ENCODE measurements at regions of chr11 and their contacts with region 1.

Region 1: DNA sequence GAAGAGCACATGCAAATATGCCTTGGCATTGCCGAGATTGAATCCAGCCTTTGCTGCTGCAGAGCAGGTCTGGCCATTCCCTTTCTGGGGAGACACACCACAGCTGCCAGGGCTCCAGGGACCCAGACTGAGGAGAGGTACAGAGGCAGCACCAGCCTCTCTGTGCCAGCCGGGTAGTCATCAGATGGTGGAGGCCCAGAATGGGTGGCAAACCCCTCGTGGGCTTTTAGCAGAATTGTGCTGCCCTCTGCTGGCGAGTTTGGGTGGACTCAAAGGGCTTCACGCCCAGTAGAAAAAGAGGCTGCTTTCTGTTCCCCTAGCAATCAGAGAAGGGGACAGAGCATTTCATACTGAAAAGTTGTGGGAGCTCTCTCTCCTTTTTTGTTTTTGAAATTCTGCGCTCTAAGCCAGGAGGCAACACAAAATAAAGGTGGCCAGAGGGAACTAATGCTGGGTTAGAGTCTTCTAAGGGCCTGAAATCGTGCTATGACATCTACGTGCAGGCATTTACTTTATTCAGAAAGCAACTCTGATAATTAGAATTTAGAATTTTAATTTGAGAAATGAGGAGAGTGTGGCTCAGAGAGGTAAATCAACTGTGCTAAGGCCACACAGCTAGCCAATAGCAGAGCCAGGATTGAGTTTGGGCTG is 158.8 kb upstream of the NAV2 start:
- DNase-seq: peak; percentile 58
- ATAC-seq: peak; percentile 81
- H3K4me3 ChIP-seq: no peak overlapping the region
- H3K27ac ChIP-seq: no peak overlapping the region
- H3K4me1 ChIP-seq: no peaks in the 10 kb centered on the region
- H3K27me3 ChIP-seq: peaks cover 5% of the 10 kb centered on the region; the same call in 1 of the 2 replicates
- CTCF ChIP-seq: peak; percentile 81 to 97 (median 91)
- POLR2A ChIP-seq: no peak
- RAD21 ChIP-seq: peak; percentile 96

Region 2: DNA sequence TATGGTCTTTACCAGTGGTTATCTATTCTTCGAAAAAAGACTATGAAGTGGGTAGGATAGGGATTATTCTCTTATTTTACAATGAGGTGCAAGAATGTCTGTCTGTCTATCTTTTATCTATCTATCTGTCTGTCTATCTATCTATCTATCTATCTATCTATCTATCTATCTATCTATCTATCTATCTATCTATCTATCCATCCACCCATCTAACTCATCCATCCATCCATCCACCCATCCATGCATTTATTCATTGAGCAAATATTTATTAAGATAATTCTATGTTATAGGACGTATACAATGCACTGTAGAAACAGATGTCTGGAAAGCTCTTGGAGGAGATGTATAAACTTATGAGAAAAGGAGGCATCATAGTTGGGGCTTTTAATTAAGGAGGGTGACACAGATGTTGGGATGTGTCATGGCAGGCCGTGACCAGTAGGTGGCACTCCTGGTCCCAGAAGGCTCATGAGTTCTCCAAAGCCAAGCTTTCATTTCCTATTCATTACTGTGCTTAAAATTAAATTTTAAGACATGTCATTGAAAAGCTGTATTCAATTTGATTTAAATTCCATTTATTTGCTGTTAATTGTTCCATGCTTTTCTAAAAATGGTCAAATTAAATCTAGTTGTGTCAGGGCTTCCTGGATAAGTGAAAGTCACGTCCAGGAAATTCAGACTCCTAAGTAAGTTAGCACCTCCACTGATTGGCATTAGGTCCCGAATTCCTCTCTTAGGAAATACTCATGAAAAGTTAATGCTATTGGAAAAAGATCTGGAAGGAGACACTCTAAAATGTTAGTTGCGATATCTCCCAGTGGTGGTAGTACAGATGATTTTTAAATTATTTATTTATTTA is 294.1 kb before region 1 on chr11:
- CTCF ChIA-PET with region 1: interaction called, 8 read pairs
- POLR2A ChIA-PET with region 1: no interaction called
- RAD21 ChIA-PET with region 1: no interaction called
- intact Hi-C with region 1: loop called (anchors 1 kb)
- DNase-seq: peak; percentile 24
- ATAC-seq: peak; percentile 88
- H3K4me3 ChIP-seq: peak overlapping the region in 1 of 2 experiments; percentile 8; a peak in 1 of 4 replicates
- H3K27ac ChIP-seq: no peak overlapping the region
- H3K4me1 ChIP-seq: no peaks in the 10 kb centered on the region
- H3K27me3 ChIP-seq: no peaks in the 10 kb centered on the region
- CTCF ChIP-seq: peak; percentile 71 to 95 (median 90); a peak in 5 of 6 replicates
- POLR2A ChIP-seq: no peak
- RAD21 ChIP-seq: peak; percentile 70

Region 3: DNA sequence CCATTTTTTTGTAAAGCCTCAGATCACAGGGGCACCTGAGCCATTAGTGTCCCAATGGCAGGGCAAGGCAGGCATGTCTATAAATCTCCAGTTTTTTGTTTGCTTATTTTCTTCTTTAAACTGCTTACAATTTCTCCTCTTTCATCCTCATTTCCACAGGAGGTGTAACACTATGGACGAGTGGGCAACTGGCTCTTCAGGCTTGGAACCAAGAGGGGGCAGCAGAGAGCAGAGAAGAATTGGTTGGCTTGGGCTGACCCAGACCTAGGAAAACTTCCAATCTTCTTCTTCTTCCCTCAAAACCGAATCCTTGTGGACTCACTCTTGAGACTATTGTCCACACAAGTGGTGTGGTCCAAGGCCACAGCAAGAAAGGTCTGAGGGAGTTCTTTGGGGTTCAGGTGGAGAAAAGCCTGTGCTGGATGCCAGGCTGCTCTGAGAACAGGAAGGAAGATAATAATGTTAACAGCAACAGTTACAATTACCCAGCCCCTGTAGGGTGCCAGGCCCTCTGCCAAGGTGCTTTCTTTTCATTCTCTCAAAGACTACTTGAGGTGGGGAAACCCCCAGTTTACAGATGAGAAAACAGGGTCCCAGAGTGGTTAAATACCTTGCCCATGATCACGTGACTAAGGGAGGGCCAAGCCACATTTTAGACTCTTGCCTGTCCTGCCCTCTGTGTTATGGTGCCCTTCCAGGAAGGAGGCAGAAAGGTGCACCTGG is 242.3 kb before region 1 on chr11:
- CTCF ChIA-PET with region 1: no interaction called
- POLR2A ChIA-PET with region 1: no interaction called
- RAD21 ChIA-PET with region 1: no interaction called
- intact Hi-C with region 1: loop called (anchors 1 kb)
- DNase-seq: peak; percentile 31
- ATAC-seq: peak; percentile 97
- H3K4me3 ChIP-seq: no peak overlapping the region
- H3K27ac ChIP-seq: no peak overlapping the region
- H3K4me1 ChIP-seq: no peaks in the 10 kb centered on the region
- H3K27me3 ChIP-seq: peaks cover 17% of the 10 kb centered on the region
- CTCF ChIP-seq: peak; percentile 53 to 93 (median 85)
- POLR2A ChIP-seq: no peak
- RAD21 ChIP-seq: peak; percentile 58

Region 4: GRCh38 chr11:19326499-19326898 is 227.3 kb before region 1 on chr11:
- CTCF ChIA-PET with region 1: no interaction called
- POLR2A ChIA-PET with region 1: no interaction called
- RAD21 ChIA-PET with region 1: no interaction called
- intact Hi-C with region 1: loop called (anchors 5 kb)
- DNase-seq: no peak
- ATAC-seq: peak; percentile 49
- H3K4me3 ChIP-seq: no peak overlapping the region
- H3K27ac ChIP-seq: no peak overlapping the region
- H3K4me1 ChIP-seq: no peaks in the 10 kb centered on the region
- H3K27me3 ChIP-seq: peaks cover 79% of the 10 kb centered on the region
- CTCF ChIP-seq: peak in 2 of 3 experiments; percentile 17 to 35; a peak in 2 of 6 replicates
- POLR2A ChIP-seq: no peak
- RAD21 ChIP-seq: no peak; the same call in 1 of the 2 replicates

Region 5: GRCh38 chr11:19679952-19680828 is 126.4 kb after region 1 on chr11:
- CTCF ChIA-PET with region 1: no interaction called
- POLR2A ChIA-PET with region 1: no interaction called
- RAD21 ChIA-PET with region 1: no interaction called
- intact Hi-C with region 1: no loop called
- DNase-seq: peak; percentile 75
- ATAC-seq: peak; percentile 91
- H3K4me3 ChIP-seq: peak overlapping the region; percentile 10 to 17
- H3K27ac ChIP-seq: no peak overlapping the region
- H3K4me1 ChIP-seq: peaks cover 11 to 37% of the 10 kb centered on the region in 2 experiments
- H3K27me3 ChIP-seq: no peaks in the 10 kb centered on the region
- CTCF ChIP-seq: no peak
- POLR2A ChIP-seq: no peak
- RAD21 ChIP-seq: peak; percentile 28

Region 6: GRCh38 chr11:19742588-19743292 is 188.9 kb after region 1 on chr11:
- CTCF ChIA-PET with region 1: interaction called, 23 read pairs
- POLR2A ChIA-PET with region 1: no interaction called
- RAD21 ChIA-PET with region 1: interaction called in 1 of 2 experiments, 3 read pairs
- intact Hi-C with region 1: no loop called
- DNase-seq: peak; percentile 51
- ATAC-seq: peak; percentile 97
- H3K4me3 ChIP-seq: no peak overlapping the region
- H3K27ac ChIP-seq: no peak overlapping the region
- H3K4me1 ChIP-seq: no peaks in the 10 kb centered on the region
- H3K27me3 ChIP-seq: no peaks in the 10 kb centered on the region
- CTCF ChIP-seq: peak; percentile 81 to 90 (median 88); a peak in 5 of 6 replicates
- POLR2A ChIP-seq: no peak
- RAD21 ChIP-seq: peak; percentile 96

Region 7: DNA sequence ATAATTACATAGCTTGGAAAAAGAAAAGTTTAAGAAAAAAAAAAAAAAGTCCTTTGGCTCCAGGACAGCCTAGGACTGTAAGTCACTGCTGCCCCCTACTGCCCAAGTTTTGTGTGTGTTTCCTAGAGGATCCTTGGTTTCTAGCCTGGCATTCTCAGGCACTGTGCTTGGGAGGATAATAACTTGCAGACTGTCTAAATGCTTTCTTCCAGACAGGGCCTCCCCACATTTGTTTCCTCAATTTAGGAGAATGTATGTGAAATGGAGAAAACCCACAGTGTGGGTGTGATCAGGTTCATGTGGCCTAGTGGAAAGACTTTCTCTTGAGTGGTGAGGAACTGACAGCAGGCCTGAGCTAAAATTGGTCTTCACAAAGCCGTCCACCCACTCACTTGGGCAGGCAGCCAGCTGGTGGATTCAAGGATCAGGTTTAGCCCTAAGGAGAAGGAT is 349.8 kb after region 1 on chr11:
- CTCF ChIA-PET with region 1: interaction called, 29 read pairs
- POLR2A ChIA-PET with region 1: no interaction called
- RAD21 ChIA-PET with region 1: interaction called, 4 to 5 read pairs
- intact Hi-C with region 1: no loop called
- DNase-seq: peak; percentile 62
- ATAC-seq: peak; percentile 90
- H3K4me3 ChIP-seq: no peak overlapping the region
- H3K27ac ChIP-seq: no peak overlapping the region
- H3K4me1 ChIP-seq: peaks cover 3 to 4% of the 10 kb centered on the region in 2 experiments; a peak in 3 of 4 replicates
- H3K27me3 ChIP-seq: no peaks in the 10 kb centered on the region
- CTCF ChIP-seq: peak; percentile 73 to 85 (median 76); a peak in 5 of 6 replicates
- POLR2A ChIP-seq: no peak
- RAD21 ChIP-seq: peak; percentile 85

Region 8: DNA sequence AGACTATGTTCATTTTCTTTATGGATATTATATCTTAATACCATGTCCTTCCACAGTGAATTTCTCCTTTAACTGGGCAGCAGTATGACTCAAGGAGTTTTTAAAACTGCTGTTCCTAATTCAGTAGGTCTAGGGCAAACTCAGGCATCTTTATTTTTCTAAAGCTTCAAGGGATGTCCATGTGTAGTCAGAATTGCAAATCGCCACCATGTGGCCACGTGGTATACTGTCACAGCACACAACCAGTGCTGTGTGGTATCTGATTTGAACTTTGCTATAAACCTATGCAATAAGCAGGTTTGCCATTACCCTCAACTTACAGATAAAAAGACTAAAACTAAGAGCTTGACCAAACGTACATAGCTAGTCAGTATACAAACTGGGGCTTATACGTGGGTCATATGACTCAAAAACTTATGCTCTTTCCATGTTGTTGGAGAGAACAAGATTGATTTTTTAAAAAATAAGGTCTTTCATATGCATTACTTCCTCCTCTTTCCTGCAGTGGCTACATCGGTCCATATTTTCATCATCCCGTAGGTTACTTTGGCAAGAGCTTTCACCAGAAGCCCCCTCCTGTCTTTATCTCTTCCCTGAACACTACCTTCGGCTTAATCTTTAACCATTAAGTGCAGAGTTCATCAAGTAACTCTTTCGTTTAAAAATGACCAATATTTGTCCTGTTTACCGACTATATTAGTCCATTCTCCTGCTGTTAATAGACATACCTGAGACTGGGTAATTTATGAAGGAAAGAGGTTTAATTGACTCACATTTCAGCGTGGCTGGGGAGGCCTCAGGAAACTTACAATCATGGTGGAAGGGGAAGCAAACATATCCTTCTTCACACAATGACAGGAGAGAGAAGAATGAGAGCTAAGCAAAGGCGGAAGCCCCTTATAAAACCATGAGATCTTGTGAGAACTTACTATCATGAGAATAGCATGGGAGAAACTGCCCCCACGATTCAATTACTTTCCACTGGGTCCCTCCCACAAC is 801.7 kb after region 1 on chr11:
- CTCF ChIA-PET with region 1: no interaction called
- POLR2A ChIA-PET with region 1: no interaction called
- RAD21 ChIA-PET with region 1: no interaction called
- intact Hi-C with region 1: loop called (anchors 10 kb)
- DNase-seq: peak; percentile 54
- ATAC-seq: peak; percentile 89
- H3K4me3 ChIP-seq: no peak overlapping the region
- H3K27ac ChIP-seq: no peak overlapping the region
- H3K4me1 ChIP-seq: peaks cover 0 to 12% of the 10 kb centered on the region in 2 experiments; a peak in 2 of 4 replicates
- H3K27me3 ChIP-seq: no peaks in the 10 kb centered on the region
- CTCF ChIP-seq: peak; percentile 28 to 70 (median 64); a peak in 5 of 6 replicates
- POLR2A ChIP-seq: no peak
- RAD21 ChIP-seq: peak; percentile 35; the same call in 1 of the 2 replicates

Measured in HCT116 (cell line).